ENCODE measurements at regions of chr17 and their contacts with region 1.

Region 1: DNA sequence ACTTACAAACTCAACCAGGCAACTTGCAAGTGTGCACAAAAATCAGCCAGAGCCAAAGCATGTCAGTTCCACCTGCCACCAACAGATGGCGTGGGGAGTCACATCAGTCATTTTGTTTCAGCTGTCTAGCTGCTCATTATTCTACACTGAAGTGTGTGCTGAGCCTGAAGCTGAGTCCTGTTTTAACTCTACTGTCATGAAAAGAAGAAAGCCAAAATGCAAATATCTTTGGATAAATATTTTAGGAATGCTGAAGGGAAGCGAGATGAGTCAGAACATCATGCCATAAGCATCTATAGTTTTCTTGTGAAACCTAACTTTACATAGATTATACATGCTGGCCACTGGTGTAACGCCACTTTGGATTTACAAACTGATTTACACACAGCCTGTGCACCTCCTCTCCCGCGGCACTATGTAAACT is 172.6 kb downstream of the CDK5R1 start:
- DNase-seq: peak; percentile 83
- ATAC-seq: peak; percentile 78
- H3K4me3 Mint-ChIP-seq: no peak overlapping the region
- H3K27ac Mint-ChIP-seq: no peak overlapping the region
- H3K4me1 Mint-ChIP-seq: no peaks in the 10 kb centered on the region
- H3K27me3 Mint-ChIP-seq: no peaks in the 10 kb centered on the region
- CTCF ChIP-seq: peak; percentile 95

Region 2: GRCh38 chr17:32444308-32445073 is 214.9 kb before region 1 on chr17 and contains the start of gene PSMD11:
- CTCF ChIA-PET with region 1: interaction called, 16 read pairs
- POLR2A ChIA-PET with region 1: no interaction called
- intact Hi-C with region 1: no loop called
- DNase-seq: peak; percentile 99
- ATAC-seq: peak; percentile 97
- H3K4me3 Mint-ChIP-seq: peak within 1 kb of the TSS; percentile 80
- H3K27ac Mint-ChIP-seq: peak within 1 kb of the TSS; percentile 76
- H3K4me1 Mint-ChIP-seq: peaks cover 37% of the 10 kb centered on the region
- H3K27me3 Mint-ChIP-seq: peaks cover 6% of the 10 kb centered on the region
- CTCF ChIP-seq: no peak
- total RNA-seq, gene PSMD11: 119 to 130 TPM

Region 3: GRCh38 chr17:32648450-32648849 is 11.0 kb before region 1 on chr17:
- CTCF ChIA-PET with region 1: interaction called, 25 read pairs
- POLR2A ChIA-PET with region 1: no interaction called
- intact Hi-C with region 1: no loop called
- DNase-seq: no peak
- ATAC-seq: no peak
- H3K4me3 Mint-ChIP-seq: no peak overlapping the region
- H3K27ac Mint-ChIP-seq: no peak overlapping the region
- H3K4me1 Mint-ChIP-seq: no peaks in the 10 kb centered on the region
- H3K27me3 Mint-ChIP-seq: no peaks in the 10 kb centered on the region
- CTCF ChIP-seq: no peak

Region 4: GRCh38 chr17:32671896-32672295 is 12.5 kb after region 1 on chr17:
- CTCF ChIA-PET with region 1: interaction called, 32 read pairs
- POLR2A ChIA-PET with region 1: no interaction called
- intact Hi-C with region 1: no loop called
- DNase-seq: no peak
- ATAC-seq: no peak
- H3K4me3 Mint-ChIP-seq: no peak overlapping the region
- H3K27ac Mint-ChIP-seq: no peak overlapping the region
- H3K4me1 Mint-ChIP-seq: no peaks in the 10 kb centered on the region
- H3K27me3 Mint-ChIP-seq: no peaks in the 10 kb centered on the region
- CTCF ChIP-seq: no peak

Region 5: GRCh38 chr17:32684087-32684958 is 24.9 kb after region 1 on chr17:
- CTCF ChIA-PET with region 1: no interaction called
- POLR2A ChIA-PET with region 1: no interaction called
- intact Hi-C with region 1: no loop called
- DNase-seq: no peak
- ATAC-seq: no peak
- H3K4me3 Mint-ChIP-seq: no peak overlapping the region
- H3K27ac Mint-ChIP-seq: no peak overlapping the region
- H3K4me1 Mint-ChIP-seq: no peaks in the 10 kb centered on the region
- H3K27me3 Mint-ChIP-seq: peaks cover 3% of the 10 kb centered on the region
- CTCF ChIP-seq: no peak

Region 6: DNA sequence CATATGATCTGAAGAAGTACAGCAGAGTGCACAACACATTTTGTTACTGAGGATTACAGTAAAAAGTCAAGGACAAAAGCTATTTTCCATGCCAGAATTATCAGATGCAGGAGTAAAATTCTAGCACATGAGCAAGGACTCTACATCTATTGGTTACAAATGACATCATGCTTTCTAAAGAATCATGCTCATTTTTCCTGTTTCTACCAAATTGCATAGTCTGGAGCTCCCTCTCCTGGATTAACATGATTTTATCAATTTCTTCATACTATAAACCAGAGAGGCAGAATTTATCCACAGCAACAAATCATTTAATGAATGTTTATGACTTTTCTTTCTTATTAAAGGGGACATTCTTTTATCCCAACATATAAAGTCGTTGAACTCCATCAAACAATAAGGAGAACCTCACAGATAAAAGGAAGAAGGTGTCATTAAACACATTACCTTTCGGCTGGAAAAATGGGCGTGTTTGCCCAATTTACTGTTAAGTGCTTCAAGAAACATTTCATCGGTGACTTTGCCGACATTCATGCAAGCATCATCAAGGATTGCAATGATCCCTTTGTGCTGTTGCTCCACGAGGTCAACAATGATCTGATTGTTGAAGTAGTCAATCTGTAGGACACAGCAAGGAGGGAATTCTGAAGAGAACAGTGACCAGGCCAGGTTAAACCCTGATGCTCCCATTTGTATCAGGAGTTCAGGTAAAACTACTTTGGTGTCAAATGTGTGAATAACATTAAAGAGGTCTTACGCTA is 95.8 kb after region 1 on chr17:
- CTCF ChIA-PET with region 1: interaction called, 10 read pairs
- POLR2A ChIA-PET with region 1: no interaction called
- intact Hi-C with region 1: no loop called
- DNase-seq: no peak
- ATAC-seq: peak; percentile 69
- H3K4me3 Mint-ChIP-seq: no peak overlapping the region
- H3K27ac Mint-ChIP-seq: no peak overlapping the region
- H3K4me1 Mint-ChIP-seq: peaks cover 15% of the 10 kb centered on the region
- H3K27me3 Mint-ChIP-seq: no peaks in the 10 kb centered on the region
- CTCF ChIP-seq: peak; percentile 59

Measured in activated CD8-positive, alpha-beta T cell treated with anti-CD3 and anti-CD28 coated beads for 36 hours (primary cell).